CD4-positive, alpha-beta memory T cell (primary cell): ENCODE measurements at regions of chr19 and their contacts with region 1.

Region 1: GRCh38 chr19:48333467-48334384 is 8.4 kb downstream of the EMP3 start:
- DNase-seq: peak; percentile 92 to 94 (median 93)
- H3K4me3 ChIP-seq: peak overlapping the region; percentile 81 to 93
- H3K4me3 Mint-ChIP-seq: peak overlapping the region; percentile 88 to 97 (median 94)
- H3K27ac ChIP-seq: peak overlapping the region; percentile 99
- H3K27ac Mint-ChIP-seq: peak overlapping the region; percentile 94 to 99 (median 98)
- H3K4me1 ChIP-seq: peaks cover 48% of the 10 kb centered on the region
- H3K4me1 Mint-ChIP-seq: peaks cover 23 to 60% (median 36%) of the 10 kb centered on the region in 4 donors
- H3K27me3 ChIP-seq: no peaks in the 10 kb centered on the region
- H3K27me3 Mint-ChIP-seq: no peaks in the 10 kb centered on the region

Region 2: DNA sequence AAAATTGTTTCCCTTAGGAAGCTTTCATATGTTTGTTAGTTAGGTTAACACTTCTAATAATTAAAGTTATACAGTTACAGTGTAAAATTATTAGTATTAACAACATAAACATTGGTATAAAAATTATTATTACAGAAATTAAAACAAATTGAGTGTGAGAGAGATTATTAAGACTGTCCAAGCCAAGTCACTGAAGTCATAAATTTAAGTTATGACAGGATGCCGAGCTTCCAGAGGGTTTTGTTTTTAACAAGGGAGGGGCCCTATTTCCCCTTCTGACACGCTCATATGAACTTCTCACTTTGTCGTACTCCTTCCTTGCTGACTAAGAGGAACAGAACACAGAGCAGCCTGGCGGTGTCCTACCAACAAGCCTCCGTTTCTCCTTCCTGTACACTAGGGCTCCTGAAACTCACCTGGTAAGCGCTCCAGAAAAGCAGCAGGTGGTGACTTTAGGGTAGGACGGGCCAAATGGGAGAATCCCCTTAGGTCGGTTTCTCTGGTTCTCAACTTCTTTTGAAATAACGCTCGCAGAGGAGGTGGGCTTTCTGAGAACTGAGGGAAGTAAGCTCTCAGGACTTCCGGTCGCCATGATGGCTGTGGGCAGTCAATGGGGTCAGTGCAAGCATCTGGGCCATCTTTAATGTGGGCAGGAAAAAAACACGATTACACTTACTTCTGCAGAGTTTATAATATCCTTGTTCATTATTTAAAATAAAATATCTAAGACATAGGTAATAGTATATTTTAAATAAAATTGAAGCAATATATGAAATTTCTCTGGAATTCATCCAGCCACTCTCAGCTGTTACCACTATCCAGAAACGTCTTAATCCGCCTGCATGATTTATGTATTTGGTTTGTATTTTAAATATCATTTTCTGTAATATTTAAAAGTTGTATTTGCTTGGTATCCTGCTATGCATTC is 78.1 kb before region 1 on chr19 and contains the start of gene CARD8:
- CTCF ChIA-PET with region 1: interaction called, 3 read pairs
- POLR2A ChIA-PET with region 1: interaction called, 11 read pairs
- intact Hi-C with region 1: no loop called
- DNase-seq: peak; percentile 83 to 92 (median 87)
- H3K4me3 ChIP-seq: peak within 1 kb of the TSS; percentile 77 to 86
- H3K4me3 Mint-ChIP-seq: peak within 1 kb of the TSS; percentile 92 to 99 (median 99)
- H3K27ac ChIP-seq: peak within 1 kb of the TSS; percentile 90
- H3K27ac Mint-ChIP-seq: peak within 1 kb of the TSS; percentile 93 to 100 (median 98)
- H3K4me1 ChIP-seq: peaks cover 75% of the 10 kb centered on the region
- H3K4me1 Mint-ChIP-seq: peaks cover 47 to 83% (median 61%) of the 10 kb centered on the region in 4 donors
- H3K27me3 ChIP-seq: no peaks in the 10 kb centered on the region
- H3K27me3 Mint-ChIP-seq: no peaks in the 10 kb centered on the region
- total RNA-seq, gene CARD8: 310 to 316 TPM

Region 3: GRCh38 chr19:48290771-48291488 is 42.8 kb before region 1 on chr19:
- CTCF ChIA-PET with region 1: interaction called, 15 read pairs
- POLR2A ChIA-PET with region 1: no interaction called
- intact Hi-C with region 1: loop called (anchors 1 kb)
- DNase-seq: peak; percentile 46 to 65 (median 48)
- H3K4me3 ChIP-seq: peak overlapping the region; percentile 29 to 58
- H3K4me3 Mint-ChIP-seq: peak overlapping the region; percentile 77 to 86 (median 81)
- H3K27ac ChIP-seq: no peak overlapping the region
- H3K27ac Mint-ChIP-seq: peak overlapping the region in 2 of 7 donors; percentile 27 to 68
- H3K4me1 ChIP-seq: peaks cover 8% of the 10 kb centered on the region
- H3K4me1 Mint-ChIP-seq: peaks cover 0 to 8% (median 3%) of the 10 kb centered on the region in 4 donors
- H3K27me3 ChIP-seq: no peaks in the 10 kb centered on the region
- H3K27me3 Mint-ChIP-seq: peaks cover 3 to 13% of the 10 kb centered on the region in 2 donors

Region 4: GRCh38 chr19:48351341-48351752 is 17.6 kb after region 1 on chr19:
- CTCF ChIA-PET with region 1: interaction called, 20 read pairs
- POLR2A ChIA-PET with region 1: interaction called, 3 read pairs
- intact Hi-C with region 1: no loop called
- DNase-seq: peak; percentile 63 to 77 (median 69)
- H3K4me3 ChIP-seq: no peak overlapping the region
- H3K4me3 Mint-ChIP-seq: no peak overlapping the region
- H3K27ac ChIP-seq: no peak overlapping the region
- H3K27ac Mint-ChIP-seq: peak overlapping the region in 3 of 7 donors; percentile 66 to 93 (median 76)
- H3K4me1 ChIP-seq: no peaks in the 10 kb centered on the region
- H3K4me1 Mint-ChIP-seq: peaks cover 0 to 9% (median 4%) of the 10 kb centered on the region in 4 donors
- H3K27me3 ChIP-seq: no peaks in the 10 kb centered on the region
- H3K27me3 Mint-ChIP-seq: no peaks in the 10 kb centered on the region

Region 5: GRCh38 chr19:48370955-48371354 is 37.2 kb after region 1 on chr19:
- CTCF ChIA-PET with region 1: no interaction called
- POLR2A ChIA-PET with region 1: no interaction called
- intact Hi-C with region 1: no loop called
- DNase-seq: no peak
- H3K4me3 ChIP-seq: no peak overlapping the region
- H3K4me3 Mint-ChIP-seq: no peak overlapping the region
- H3K27ac ChIP-seq: no peak overlapping the region
- H3K27ac Mint-ChIP-seq: no peak overlapping the region
- H3K4me1 ChIP-seq: no peaks in the 10 kb centered on the region
- H3K4me1 Mint-ChIP-seq: no peaks in the 10 kb centered on the region
- H3K27me3 ChIP-seq: no peaks in the 10 kb centered on the region
- H3K27me3 Mint-ChIP-seq: no peaks in the 10 kb centered on the region

Region 6: GRCh38 chr19:48468775-48469288 is 135.1 kb after region 1 on chr19:
- CTCF ChIA-PET with region 1: no interaction called
- POLR2A ChIA-PET with region 1: no interaction called
- intact Hi-C with region 1: loop called (anchors 2 kb)
- DNase-seq: peak; percentile 99 to 100 (median 100)
- H3K4me3 ChIP-seq: peak overlapping the region in 1 of 2 donors; percentile 65
- H3K4me3 Mint-ChIP-seq: peak overlapping the region; percentile 89 to 96 (median 92)
- H3K27ac ChIP-seq: peak overlapping the region; percentile 81
- H3K27ac Mint-ChIP-seq: peak overlapping the region; percentile 83 to 98 (median 95)
- H3K4me1 ChIP-seq: peaks cover 18% of the 10 kb centered on the region
- H3K4me1 Mint-ChIP-seq: peaks cover 7 to 24% (median 13%) of the 10 kb centered on the region in 4 donors
- H3K27me3 ChIP-seq: no peaks in the 10 kb centered on the region
- H3K27me3 Mint-ChIP-seq: no peaks in the 10 kb centered on the region